Activated CD4-positive, alpha-beta memory T cell treated with anti-CD3 and anti-CD28 coated beads for 36 hours (primary cell): ENCODE measurements at regions of chr1 and their contacts with region 1.

Region 1: DNA sequence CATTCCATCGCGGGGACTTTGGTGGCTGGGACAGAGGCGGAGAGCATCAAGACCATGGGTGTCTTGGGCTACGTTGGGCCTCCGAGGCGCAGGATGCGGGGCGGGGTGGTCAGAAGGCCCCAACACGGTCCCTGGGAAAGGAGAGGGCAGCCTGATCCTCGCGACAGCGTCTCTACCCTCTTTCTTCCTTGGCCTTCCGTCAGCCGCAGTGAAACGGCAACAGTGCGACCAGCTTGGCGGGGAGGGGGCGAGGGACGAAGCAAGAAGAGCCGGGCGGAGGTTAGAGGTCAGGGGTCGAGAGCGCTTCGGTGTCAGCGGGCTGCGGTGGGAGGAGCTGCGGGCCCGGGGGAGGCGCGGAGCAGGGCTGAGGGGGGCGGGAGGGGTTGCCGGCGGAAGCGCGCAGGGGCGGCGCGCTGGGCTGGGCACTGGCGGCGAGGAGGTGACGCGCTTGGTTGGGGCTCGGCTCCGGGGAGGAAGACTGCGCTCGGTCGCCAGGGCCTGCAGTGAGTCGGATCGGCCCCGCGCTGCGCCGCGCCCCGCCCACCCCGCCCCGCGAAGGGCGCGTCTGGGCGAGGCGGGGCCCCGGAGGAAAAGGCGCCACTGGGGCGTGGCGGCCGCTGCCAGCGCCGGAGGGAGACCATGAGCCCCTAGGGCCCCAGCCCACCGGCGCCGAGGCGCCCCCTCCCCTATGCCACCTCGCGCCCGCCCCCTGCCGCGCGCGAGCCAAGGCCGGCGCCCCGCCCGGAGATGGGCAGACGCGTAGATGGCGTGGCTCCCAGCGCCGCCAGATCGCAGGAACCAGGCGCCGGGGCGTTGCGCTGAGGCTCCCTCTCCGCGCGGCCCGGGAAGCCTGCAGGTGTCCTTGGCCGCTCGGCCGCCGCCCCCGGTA is at the start of gene KCNC4:
- DNase-seq: peak; percentile 95
- H3K4me3 Mint-ChIP-seq: peak within 1 kb of the TSS; percentile 88
- H3K27ac Mint-ChIP-seq: peak within 1 kb of the TSS; percentile 84
- H3K4me1 Mint-ChIP-seq: peaks cover 47% of the 10 kb centered on the region
- H3K27me3 Mint-ChIP-seq: no peaks in the 10 kb centered on the region
- total RNA-seq, gene KCNC4: 15.0 to 15.1 TPM

Region 2: DNA sequence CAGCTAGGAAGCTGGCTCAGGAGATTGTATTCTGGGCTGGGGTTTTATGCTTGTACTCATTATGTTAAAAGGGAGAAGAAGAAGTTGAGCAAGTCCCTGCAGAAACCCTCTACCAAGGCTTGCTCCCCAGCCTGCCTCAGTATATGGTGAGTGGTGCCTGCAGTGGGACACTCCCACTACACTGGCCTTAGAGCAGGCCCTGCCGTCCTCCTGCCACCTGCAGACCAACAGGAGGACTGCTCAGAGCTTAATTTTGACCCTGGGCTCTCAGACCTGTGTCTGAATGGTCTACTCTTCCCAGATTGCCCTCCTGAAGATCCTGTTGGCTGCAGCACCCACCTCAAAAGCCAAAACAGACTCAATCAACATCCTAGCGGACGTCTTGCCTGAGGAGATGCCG is 162.5 kb before region 1 on chr1:
- CTCF ChIA-PET with region 1: no interaction called
- POLR2A ChIA-PET with region 1: no interaction called
- intact Hi-C with region 1: no loop called
- DNase-seq: no peak
- H3K4me3 Mint-ChIP-seq: no peak overlapping the region
- H3K27ac Mint-ChIP-seq: no peak overlapping the region
- H3K4me1 Mint-ChIP-seq: no peaks in the 10 kb centered on the region
- H3K27me3 Mint-ChIP-seq: no peaks in the 10 kb centered on the region

Region 3: GRCh38 chr1:110224240-110224995 is 14.5 kb after region 1 on chr1:
- CTCF ChIA-PET with region 1: interaction called, 18 read pairs
- POLR2A ChIA-PET with region 1: no interaction called
- intact Hi-C with region 1: no loop called
- DNase-seq: no peak
- H3K4me3 Mint-ChIP-seq: no peak overlapping the region
- H3K27ac Mint-ChIP-seq: no peak overlapping the region
- H3K4me1 Mint-ChIP-seq: no peaks in the 10 kb centered on the region
- H3K27me3 Mint-ChIP-seq: no peaks in the 10 kb centered on the region

Region 4: GRCh38 chr1:110254996-110255787 is 45.2 kb after region 1 on chr1:
- CTCF ChIA-PET with region 1: interaction called, 19 read pairs
- POLR2A ChIA-PET with region 1: no interaction called
- intact Hi-C with region 1: no loop called
- DNase-seq: no peak
- H3K4me3 Mint-ChIP-seq: no peak overlapping the region
- H3K27ac Mint-ChIP-seq: no peak overlapping the region
- H3K4me1 Mint-ChIP-seq: peaks cover 2% of the 10 kb centered on the region
- H3K27me3 Mint-ChIP-seq: no peaks in the 10 kb centered on the region

Region 5: DNA sequence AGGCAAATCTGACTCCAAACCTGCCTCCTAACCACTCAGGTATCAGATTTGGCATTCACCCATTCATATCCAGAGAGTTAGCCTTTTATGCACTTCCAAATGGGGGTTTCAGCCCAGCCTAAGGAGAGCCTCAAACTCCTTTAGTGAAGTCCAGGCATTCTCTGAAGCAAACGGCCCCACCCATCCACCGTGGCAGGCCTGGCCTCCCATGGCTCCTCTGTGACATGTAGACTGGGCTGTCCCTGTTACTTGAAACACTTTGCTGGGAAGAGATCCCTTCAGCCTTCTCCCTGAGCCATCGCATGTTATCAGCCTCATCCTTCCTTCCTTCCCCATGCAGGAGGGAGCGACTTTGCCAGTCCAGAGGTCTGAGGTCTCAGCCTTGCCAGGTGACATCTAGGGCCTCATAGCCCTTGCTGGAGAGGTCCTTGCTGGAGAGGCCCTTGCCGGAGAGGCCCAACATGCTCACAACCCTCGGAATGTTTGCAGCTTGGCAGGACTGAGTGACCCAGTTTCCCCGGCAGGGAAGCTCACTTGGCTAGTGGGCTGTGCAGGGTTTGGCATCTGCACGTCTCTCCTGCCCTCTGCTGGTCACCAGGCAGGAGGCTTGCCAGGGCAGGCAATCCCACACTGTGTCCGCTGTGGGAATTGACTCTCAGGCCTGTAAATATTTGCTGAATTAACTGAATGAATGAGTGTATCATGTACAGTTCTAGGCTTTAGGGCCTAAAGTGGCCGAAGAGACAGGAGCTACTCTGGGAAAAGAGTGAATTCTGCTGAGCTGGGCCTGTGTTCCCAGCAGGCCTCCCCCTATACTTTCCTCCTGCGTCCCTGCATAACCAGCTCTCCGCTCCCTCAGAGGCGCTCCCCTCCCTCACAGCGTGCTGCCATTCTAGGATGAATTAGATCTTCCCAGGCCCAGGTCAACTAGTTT is 102.5 kb after region 1 on chr1:
- CTCF ChIA-PET with region 1: interaction called, 920 read pairs
- POLR2A ChIA-PET with region 1: interaction called, 9 read pairs
- intact Hi-C with region 1: loop called (anchors 1 kb)
- DNase-seq: peak; percentile 81
- H3K4me3 Mint-ChIP-seq: no peak overlapping the region
- H3K27ac Mint-ChIP-seq: no peak overlapping the region
- H3K4me1 Mint-ChIP-seq: no peaks in the 10 kb centered on the region
- H3K27me3 Mint-ChIP-seq: no peaks in the 10 kb centered on the region

Region 6: GRCh38 chr1:110460253-110461220 is 250.6 kb after region 1 on chr1:
- CTCF ChIA-PET with region 1: interaction called, 117 read pairs
- POLR2A ChIA-PET with region 1: interaction called, 3 read pairs
- intact Hi-C with region 1: loop called (anchors 1 kb)
- DNase-seq: peak; percentile 88
- H3K4me3 Mint-ChIP-seq: no peak overlapping the region
- H3K27ac Mint-ChIP-seq: no peak overlapping the region
- H3K4me1 Mint-ChIP-seq: no peaks in the 10 kb centered on the region
- H3K27me3 Mint-ChIP-seq: no peaks in the 10 kb centered on the region